KBM-7 (cell line): ENCODE measurements at regions of chr7 and their contacts with region 1.

Region 1: DNA sequence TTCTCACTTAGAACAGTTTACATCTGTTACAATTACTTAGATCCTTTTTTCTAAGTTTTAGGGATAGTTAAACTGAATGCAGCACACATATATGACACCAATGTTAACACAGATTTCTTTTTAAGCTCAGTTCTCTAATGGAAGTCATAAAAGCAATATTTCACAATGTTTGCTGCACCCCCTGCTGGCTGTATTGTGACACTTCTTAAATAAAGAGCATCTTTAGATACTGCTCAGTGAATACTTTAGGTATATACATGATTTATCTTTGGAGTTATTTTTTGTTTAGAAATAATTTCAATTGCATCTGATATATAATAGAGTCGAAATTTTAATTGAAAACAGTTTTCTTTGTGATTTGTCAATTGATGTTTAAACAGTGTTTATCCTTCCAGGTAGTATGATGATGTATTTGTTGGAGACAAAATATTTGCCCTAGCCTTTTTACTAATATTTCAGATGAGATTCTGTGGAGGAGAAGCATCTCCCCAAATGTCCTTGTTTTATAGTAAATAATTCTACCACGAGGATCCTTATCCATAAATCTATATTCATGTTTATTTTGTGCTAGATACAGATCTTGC is 174.4 kb downstream of the ST7 start:
- DNase-seq: peak; percentile 45

Region 2: DNA sequence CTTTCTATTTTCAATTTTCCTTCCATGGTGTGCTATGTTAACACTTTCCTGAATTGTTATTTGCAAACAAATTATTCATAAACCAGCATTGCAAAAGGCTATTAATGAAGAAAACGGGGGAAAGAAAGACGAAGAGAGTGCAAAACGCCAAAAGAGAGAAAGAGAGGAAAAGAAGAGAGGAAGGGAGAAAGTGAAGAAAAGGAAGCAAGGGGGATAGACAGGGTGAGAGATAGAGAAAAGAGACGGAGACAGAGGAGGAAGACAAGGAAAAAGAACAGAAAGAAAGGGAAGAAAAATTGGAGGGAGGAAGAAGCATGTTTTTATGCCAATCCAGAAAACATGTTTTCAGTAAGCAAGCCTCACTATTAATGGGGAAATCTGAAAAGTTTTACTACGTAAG is 1407.7 kb before region 1 on chr7:
- in situ Hi-C with region 1: no loop called
- DNase-seq: no peak

Region 3: GRCh38 chr7:116929914-116930913 is 197.5 kb before region 1 on chr7:
- in situ Hi-C with region 1: loop called (anchors 10 kb)
- DNase-seq: peak; percentile 76

Region 4: DNA sequence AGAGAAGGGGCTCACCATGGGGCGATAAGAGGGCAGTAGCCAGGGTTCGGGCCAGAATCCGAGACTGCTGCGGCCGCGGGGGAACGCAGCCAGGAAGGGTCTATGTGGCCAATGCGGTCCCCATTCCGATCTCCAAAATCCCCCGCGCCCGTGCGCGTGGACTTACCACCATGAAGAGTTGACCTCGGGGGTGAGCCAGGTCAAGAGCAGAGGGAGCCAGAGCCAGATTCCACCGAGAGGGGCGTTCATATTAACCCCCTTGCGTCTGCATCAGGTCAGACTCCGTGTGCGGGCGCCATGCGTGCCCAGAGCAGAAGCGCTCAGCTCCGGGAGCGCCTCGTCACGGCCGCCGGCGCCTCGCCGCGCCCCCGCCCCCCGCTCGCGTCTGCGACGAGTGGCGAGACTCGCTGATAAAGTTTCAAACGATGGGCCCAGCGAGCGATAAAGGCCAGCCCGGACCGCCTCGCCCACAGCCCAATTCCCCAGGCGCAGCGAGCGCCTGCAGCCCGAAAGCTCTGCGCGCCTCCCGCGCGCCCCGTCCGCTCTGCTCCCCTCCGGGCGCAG is 195.1 kb after region 1 on chr7 and contains the start of gene WNT2:
- in situ Hi-C with region 1: no loop called
- DNase-seq: no peak